Panc1 (cell line): ENCODE measurements at regions of chr5 and their contacts with region 1.

Region 1: DNA sequence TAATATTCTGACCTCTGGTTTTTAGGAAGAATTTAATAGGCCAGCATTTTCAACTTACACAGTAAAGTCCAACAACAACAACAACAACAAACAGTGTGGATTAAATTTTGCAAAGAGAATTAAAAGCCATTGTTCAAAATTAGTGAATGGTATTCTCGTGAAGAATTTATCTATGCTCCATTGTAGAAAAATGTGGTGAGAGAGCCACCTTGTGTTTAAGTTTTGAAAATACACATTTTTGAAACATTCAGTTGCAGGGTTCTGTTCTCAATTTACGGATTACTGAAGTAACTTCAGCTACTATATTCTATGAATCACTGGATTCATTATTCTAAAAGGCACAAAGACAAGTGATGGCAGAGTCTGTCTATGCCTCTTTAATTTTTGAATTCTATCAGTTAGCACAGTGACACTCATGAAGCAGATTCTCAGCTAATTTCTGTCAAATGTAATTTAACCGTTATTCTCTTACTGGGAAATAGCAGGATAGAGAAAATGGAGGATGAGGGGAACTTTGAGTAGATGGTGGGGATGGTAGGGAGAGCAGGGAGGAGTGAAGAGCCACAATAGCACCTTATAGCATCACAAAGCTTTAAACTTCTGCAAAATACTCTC is 11.0 kb downstream of the CCDC152 start:
- DNase-seq: peak; percentile 18
- ATAC-seq: 0 out of 2 replicates have a peak, but pooled peaks have one; percentile 58
- H3K4me3 ChIP-seq: no peak overlapping the region
- H3K27ac ChIP-seq: no peak overlapping the region
- H3K4me1 ChIP-seq: no peaks in the 10 kb centered on the region
- H3K27me3 ChIP-seq: peaks cover 5% of the 10 kb centered on the region
- CTCF ChIP-seq: peak; percentile 63; the same call in 1 of the 2 replicates

Region 2: GRCh38 chr5:42423285-42424165 is 344.1 kb before region 1 on chr5 and contains the start of gene GHR:
- CTCF ChIA-PET with region 1: interaction called, 4 read pairs
- POLR2A ChIA-PET with region 1: no interaction called
- in situ Hi-C with region 1: no loop called
- intact Hi-C with region 1: loop called (anchors 5 kb)
- DNase-seq: peak; percentile 58
- ATAC-seq: peak; percentile 97
- H3K4me3 ChIP-seq: peak within 1 kb of the TSS; percentile 38 to 50
- H3K27ac ChIP-seq: no peak within 1 kb of the TSS
- H3K4me1 ChIP-seq: peaks cover 7% of the 10 kb centered on the region
- H3K27me3 ChIP-seq: peaks cover 7% of the 10 kb centered on the region
- CTCF ChIP-seq: peak; percentile 85
- total RNA-seq, gene GHR: 0.05 TPM

Region 3: GRCh38 chr5:42784132-42784531 is 16.5 kb after region 1 on chr5:
- CTCF ChIA-PET with region 1: no interaction called
- POLR2A ChIA-PET with region 1: no interaction called
- in situ Hi-C with region 1: no loop called
- intact Hi-C with region 1: no loop called
- DNase-seq: no peak
- ATAC-seq: no peak
- H3K4me3 ChIP-seq: no peak overlapping the region
- H3K27ac ChIP-seq: no peak overlapping the region
- H3K4me1 ChIP-seq: no peaks in the 10 kb centered on the region
- H3K27me3 ChIP-seq: peaks cover 2% of the 10 kb centered on the region; the same call in 1 of the 2 replicates
- CTCF ChIP-seq: no peak